ENCODE measurements at regions of chr16 and their contacts with region 1.

Region 1: GRCh38 chr16:50611332-50611934 is 63.2 kb downstream of the NKD1 start:
- DNase-seq: no peak
- H3K4me3 ChIP-seq: no peak overlapping the region
- H3K27ac ChIP-seq: no peak overlapping the region
- H3K4me1 ChIP-seq: peaks cover 4 to 18% (median 7%) of the 10 kb centered on the region in 4 experiments; a peak in 6 of 7 replicates
- H3K27me3 ChIP-seq: peaks cover 0 to 1% (median 0%) of the 10 kb centered on the region in 4 experiments; a peak in 1 of 7 replicates
- CTCF ChIP-seq: no peak
- EP300 ChIP-seq: no peak
- POLR2A ChIP-seq: no peak
- RAD21 ChIP-seq: no peak

Region 2: DNA sequence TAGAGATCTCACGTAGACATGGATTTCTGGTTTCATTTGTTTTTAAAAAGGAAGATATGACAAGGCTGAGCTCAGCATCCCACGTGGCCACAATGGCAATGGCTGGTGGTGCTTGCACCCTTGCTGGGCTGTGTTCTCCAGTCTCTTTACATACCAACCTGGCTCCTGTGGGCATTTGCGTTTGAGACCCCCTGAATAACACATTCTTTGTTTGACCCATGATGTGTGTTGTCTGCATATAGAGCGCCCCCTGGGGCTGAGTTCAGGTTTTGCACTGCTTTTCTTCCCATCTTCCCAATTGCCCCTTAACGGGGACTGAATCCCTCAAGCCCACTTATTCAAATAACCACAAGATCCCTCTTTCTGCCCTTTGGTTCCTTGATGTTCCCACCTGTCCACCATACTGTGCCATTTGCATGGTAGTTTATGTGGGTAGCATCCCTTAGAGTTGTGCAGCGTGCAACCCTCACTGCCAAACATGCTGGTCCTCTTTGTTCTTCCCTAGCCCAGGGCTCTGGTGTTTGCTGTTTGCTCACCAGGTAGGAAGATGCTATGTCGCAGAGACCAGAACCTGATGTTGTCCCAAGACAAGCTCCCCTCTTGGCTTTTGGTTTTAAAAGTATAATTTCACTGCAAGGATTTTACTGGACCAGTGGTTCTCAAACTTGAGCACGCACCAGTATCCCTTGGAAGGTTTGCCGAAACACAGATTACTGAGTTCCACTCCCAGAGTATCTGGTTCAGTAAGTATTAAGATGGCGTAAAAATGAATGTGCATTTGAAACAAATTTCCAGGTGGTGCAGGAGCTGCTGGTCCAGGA is 101.7 kb before region 1 on chr16:
- CTCF ChIA-PET with region 1: no interaction called
- POLR2A ChIA-PET with region 1: no interaction called
- DNase-seq: peak; percentile 65 to 95
- H3K4me3 ChIP-seq: no peak overlapping the region
- H3K27ac ChIP-seq: no peak overlapping the region
- H3K4me1 ChIP-seq: peaks cover 0 to 6% (median 1%) of the 10 kb centered on the region in 4 experiments; a peak in 5 of 7 replicates
- H3K27me3 ChIP-seq: no peaks in the 10 kb centered on the region
- CTCF ChIP-seq: peak; percentile 58 to 93 (median 83)
- EP300 ChIP-seq: 0 out of 3 replicates have a peak, but pooled peaks of 1 of the 2 experiments have one; percentile 10
- POLR2A ChIP-seq: no peak
- RAD21 ChIP-seq: peak; percentile 78 to 86

Region 3: GRCh38 chr16:50627419-50627818 is 16.0 kb after region 1 on chr16:
- CTCF ChIA-PET with region 1: interaction called, 11 read pairs
- POLR2A ChIA-PET with region 1: no interaction called
- DNase-seq: peak in 1 of 2 experiments; percentile 58
- H3K4me3 ChIP-seq: no peak overlapping the region
- H3K27ac ChIP-seq: no peak overlapping the region
- H3K4me1 ChIP-seq: no peaks in the 10 kb centered on the region
- H3K27me3 ChIP-seq: no peaks in the 10 kb centered on the region
- CTCF ChIP-seq: peak; percentile 24 to 48 (median 33)
- EP300 ChIP-seq: no peak
- POLR2A ChIP-seq: no peak
- RAD21 ChIP-seq: peak; percentile 35 to 41; a peak in 3 of 4 replicates